CD4-positive, alpha-beta memory T cell (primary cell): ENCODE measurements at regions of chr4 and their contacts with region 1.

Region 1: GRCh38 chr4:115234405-115235093 is 121.1 kb upstream of the NDST4 start:
- DNase-seq: peak in 1 of 5 donors; percentile 6
- H3K4me3 ChIP-seq: no peak overlapping the region
- H3K4me3 Mint-ChIP-seq: no peak overlapping the region
- H3K27ac ChIP-seq: no peak overlapping the region
- H3K27ac Mint-ChIP-seq: no peak overlapping the region
- H3K4me1 ChIP-seq: no peaks in the 10 kb centered on the region
- H3K4me1 Mint-ChIP-seq: peaks cover 0 to 8% (median 2%) of the 10 kb centered on the region in 4 donors
- H3K27me3 ChIP-seq: no peaks in the 10 kb centered on the region
- H3K27me3 Mint-ChIP-seq: no peaks in the 10 kb centered on the region

Region 2: DNA sequence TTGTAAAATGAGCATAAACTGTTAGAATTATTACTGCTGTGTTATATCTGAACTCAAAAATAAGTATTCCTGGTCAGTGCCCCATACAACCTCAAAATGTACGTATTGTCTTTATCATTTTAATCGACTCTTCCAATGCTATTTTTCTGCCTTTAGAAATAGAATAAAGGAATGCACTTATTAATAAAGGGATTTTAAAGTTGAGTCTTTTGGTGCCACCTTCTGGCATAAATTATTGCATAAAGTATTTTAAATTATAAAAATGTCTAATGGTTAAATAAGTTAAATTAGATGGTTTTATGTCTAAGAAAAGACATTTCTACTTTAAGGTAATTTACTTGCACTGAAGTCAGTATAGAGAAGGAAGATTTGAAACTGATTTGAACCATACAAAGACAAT is 302.8 kb after region 1 on chr4:
- CTCF ChIA-PET with region 1: no interaction called
- POLR2A ChIA-PET with region 1: no interaction called
- intact Hi-C with region 1: loop called (anchors 10 kb)
- DNase-seq: no peak
- H3K4me3 ChIP-seq: no peak overlapping the region
- H3K4me3 Mint-ChIP-seq: no peak overlapping the region
- H3K27ac ChIP-seq: no peak overlapping the region
- H3K27ac Mint-ChIP-seq: no peak overlapping the region
- H3K4me1 ChIP-seq: no peaks in the 10 kb centered on the region
- H3K4me1 Mint-ChIP-seq: no peaks in the 10 kb centered on the region
- H3K27me3 ChIP-seq: no peaks in the 10 kb centered on the region
- H3K27me3 Mint-ChIP-seq: no peaks in the 10 kb centered on the region